Mammary epithelial cell (primary cell): ENCODE measurements at regions of chr17 and their contacts with region 1.

Region 1: DNA sequence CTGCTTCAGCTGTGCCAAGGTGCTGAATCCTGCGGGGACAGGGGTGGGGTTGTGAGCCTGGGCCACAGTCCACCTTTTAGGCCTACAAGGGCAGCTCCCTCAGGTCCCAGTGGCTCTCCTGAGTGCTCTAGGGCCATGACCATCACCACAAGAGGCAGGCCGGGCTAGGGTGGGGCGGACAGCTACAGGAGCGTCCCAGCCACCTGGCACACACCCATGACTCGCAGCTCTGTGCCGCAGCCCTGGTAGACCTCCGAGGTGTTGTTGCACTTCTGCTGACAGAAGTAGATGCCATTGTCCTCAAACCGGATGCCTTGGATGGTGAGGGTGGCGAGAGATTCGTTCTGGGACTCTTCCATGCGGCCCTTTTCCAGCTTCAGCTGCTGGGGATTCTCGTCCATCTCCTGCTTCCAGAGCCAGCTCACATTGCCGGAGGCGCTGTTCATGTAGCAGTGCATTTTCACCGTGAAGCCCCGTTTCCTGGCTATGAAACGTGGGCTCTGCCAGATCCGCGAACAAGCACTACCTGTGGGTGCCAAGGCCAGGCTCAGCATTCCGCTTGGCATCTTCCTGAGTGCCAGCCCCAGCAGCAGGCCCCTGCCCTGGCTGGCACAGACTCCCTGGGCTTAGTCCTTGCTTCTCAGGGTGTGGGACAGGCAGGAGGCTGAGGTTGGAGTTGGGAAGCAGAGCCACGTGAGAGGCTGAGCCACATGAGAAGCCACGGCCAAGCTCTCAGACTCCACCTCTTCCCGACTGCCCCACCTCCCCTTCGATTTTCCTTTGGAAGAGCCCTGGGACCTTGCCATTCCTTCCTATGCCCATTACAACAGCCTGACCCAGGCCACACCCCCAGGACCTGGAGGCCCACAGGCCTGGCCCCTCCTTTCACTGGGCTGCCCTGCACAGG is 2.0 kb downstream of the CD79B start:
- DNase-seq: no peak
- H3K4me3 ChIP-seq: no peak overlapping the region
- H3K27ac ChIP-seq: no peak overlapping the region
- H3K4me1 ChIP-seq: peaks cover 18% of the 10 kb centered on the region
- H3K27me3 ChIP-seq: no peaks in the 10 kb centered on the region
- CTCF ChIP-seq: no peak

Region 2: DNA sequence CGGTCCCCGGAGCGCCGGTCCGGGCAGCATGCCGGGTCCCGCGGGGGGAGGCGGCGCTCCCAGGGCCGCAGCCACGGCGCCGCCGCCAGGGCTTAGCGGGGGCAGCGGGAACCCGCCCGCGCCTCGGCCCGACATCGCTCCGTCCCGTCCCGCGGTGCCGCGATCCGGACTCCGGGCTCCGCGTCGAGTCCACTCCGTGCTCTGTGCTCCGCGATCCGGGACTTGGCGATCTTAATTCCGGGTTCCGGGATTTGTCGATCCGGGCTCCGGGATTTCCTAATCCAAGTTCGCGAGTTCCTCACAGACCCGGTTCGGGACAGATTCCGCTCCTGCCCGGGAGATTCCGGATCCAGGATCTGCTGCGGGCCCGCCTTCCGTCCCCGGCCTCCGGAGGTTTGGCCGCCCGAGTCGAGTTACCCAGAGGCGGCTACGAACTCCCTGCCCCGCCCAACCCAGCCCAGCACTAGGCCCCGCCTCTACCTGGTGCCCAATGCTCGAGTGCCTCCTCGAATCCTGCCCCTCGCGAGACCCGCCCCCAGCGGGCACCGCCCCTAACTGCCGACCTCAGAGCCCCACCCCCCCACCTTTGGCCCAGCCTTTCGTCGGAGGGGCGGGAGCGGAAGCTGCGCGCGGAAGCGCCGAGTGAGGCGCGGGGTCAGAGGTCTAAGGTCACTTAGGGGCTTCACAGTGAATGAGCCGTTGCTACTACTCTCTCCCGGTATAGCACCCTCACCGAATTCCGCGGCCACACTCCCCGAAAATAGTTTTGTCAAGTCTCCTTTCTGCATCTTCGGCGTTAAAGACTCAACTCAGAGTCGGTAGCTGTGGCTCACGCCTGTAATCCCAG is 87.3 kb before region 1 on chr17 and contains the start of gene SMARCD2:
- CTCF ChIA-PET with region 1: no interaction called
- dilution Hi-C with region 1: no loop called
- in situ Hi-C with region 1: no loop called
- intact Hi-C with region 1: no loop called
- DNase-seq: peak; percentile 99
- H3K4me3 ChIP-seq: peak within 1 kb of the TSS; percentile 70 to 98 (median 90)
- H3K27ac ChIP-seq: peak within 1 kb of the TSS; percentile 52
- H3K4me1 ChIP-seq: peaks cover 35% of the 10 kb centered on the region
- H3K27me3 ChIP-seq: no peaks in the 10 kb centered on the region
- CTCF ChIP-seq: no peak
- total RNA-seq, gene SMARCD2: 66.1 to 75.3 TPM

Region 3: GRCh38 chr17:63859257-63859656 is 70.9 kb before region 1 on chr17:
- CTCF ChIA-PET with region 1: no interaction called
- dilution Hi-C with region 1: loop called (anchors 5 kb)
- in situ Hi-C with region 1: no loop called
- intact Hi-C with region 1: no loop called
- DNase-seq: no peak
- H3K4me3 ChIP-seq: no peak overlapping the region
- H3K27ac ChIP-seq: no peak overlapping the region
- H3K4me1 ChIP-seq: no peaks in the 10 kb centered on the region
- H3K27me3 ChIP-seq: no peaks in the 10 kb centered on the region
- CTCF ChIP-seq: no peak

Region 4: GRCh38 chr17:63881876-63882601 is 48.1 kb before region 1 on chr17 and contains the start of gene GH2:
- CTCF ChIA-PET with region 1: no interaction called
- dilution Hi-C with region 1: loop called (anchors 5 kb)
- in situ Hi-C with region 1: no loop called
- intact Hi-C with region 1: no loop called
- DNase-seq: peak; percentile 21
- H3K4me3 ChIP-seq: no peak within 1 kb of the TSS
- H3K27ac ChIP-seq: no peak within 1 kb of the TSS
- H3K4me1 ChIP-seq: no peaks in the 10 kb centered on the region
- H3K27me3 ChIP-seq: no peaks in the 10 kb centered on the region
- CTCF ChIP-seq: peak; percentile 65 to 73
- total RNA-seq, gene GH2: not detected

Region 5: GRCh38 chr17:63984651-63985386 is 54.7 kb after region 1 on chr17:
- CTCF ChIA-PET with region 1: no interaction called
- dilution Hi-C with region 1: loop called (anchors 5 kb)
- in situ Hi-C with region 1: no loop called
- intact Hi-C with region 1: no loop called
- DNase-seq: peak; percentile 84
- H3K4me3 ChIP-seq: no peak overlapping the region
- H3K27ac ChIP-seq: no peak overlapping the region
- H3K4me1 ChIP-seq: peaks cover 20% of the 10 kb centered on the region
- H3K27me3 ChIP-seq: no peaks in the 10 kb centered on the region
- CTCF ChIP-seq: no peak

Region 6: GRCh38 chr17:63998050-63998720 is 68.1 kb after region 1 on chr17 and contains the start of gene PRR29:
- CTCF ChIA-PET with region 1: no interaction called
- dilution Hi-C with region 1: no loop called
- in situ Hi-C with region 1: no loop called
- intact Hi-C with region 1: no loop called
- DNase-seq: peak; percentile 21
- H3K4me3 ChIP-seq: peak within 1 kb of the TSS; percentile 52 to 68 (median 59)
- H3K27ac ChIP-seq: no peak within 1 kb of the TSS
- H3K4me1 ChIP-seq: peaks cover 9% of the 10 kb centered on the region
- H3K27me3 ChIP-seq: no peaks in the 10 kb centered on the region
- CTCF ChIP-seq: no peak
- total RNA-seq, gene PRR29: under 0.01 to 0.09 TPM

Region 7: GRCh38 chr17:64020056-64020766 is 90.1 kb after region 1 on chr17 and contains the start of gene ICAM2:
- CTCF ChIA-PET with region 1: no interaction called
- dilution Hi-C with region 1: loop called (anchors 5 kb)
- in situ Hi-C with region 1: no loop called
- intact Hi-C with region 1: no loop called
- DNase-seq: no peak
- H3K4me3 ChIP-seq: no peak within 1 kb of the TSS
- H3K27ac ChIP-seq: no peak within 1 kb of the TSS
- H3K4me1 ChIP-seq: no peaks in the 10 kb centered on the region
- H3K27me3 ChIP-seq: no peaks in the 10 kb centered on the region
- CTCF ChIP-seq: no peak
- total RNA-seq, gene ICAM2: 0.49 to 2.8 TPM

Region 8: DNA sequence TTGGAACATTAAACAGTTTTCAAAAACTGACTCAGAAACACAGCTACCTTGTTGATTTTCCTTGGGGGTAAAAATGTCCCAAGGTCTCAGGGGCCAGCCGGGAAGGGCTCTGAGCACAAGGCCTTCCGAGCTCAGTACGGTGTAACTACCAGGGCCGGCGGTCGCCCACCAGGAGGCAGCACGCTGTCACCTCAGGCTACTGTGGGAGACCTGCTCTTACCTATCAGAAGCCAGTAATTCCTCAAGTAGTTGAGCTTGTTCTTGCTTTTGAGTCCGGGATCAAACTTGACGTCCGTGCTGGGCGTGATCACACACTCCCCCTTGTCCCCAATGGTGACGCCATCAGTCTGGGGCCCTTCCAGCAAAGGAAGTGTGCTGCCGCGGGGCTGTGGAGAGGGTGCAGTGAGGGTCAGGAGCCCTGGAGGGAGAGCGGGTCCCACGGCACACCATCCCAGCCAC is 133.7 kb after region 1 on chr17:
- CTCF ChIA-PET with region 1: no interaction called
- dilution Hi-C with region 1: no loop called
- in situ Hi-C with region 1: no loop called
- intact Hi-C with region 1: no loop called
- DNase-seq: no peak
- H3K4me3 ChIP-seq: no peak overlapping the region
- H3K27ac ChIP-seq: no peak overlapping the region
- H3K4me1 ChIP-seq: peaks cover 6% of the 10 kb centered on the region
- H3K27me3 ChIP-seq: no peaks in the 10 kb centered on the region
- CTCF ChIP-seq: peak; percentile 20 to 33

Region 9: GRCh38 chr17:64297467-64298098 is 367.5 kb after region 1 on chr17:
- CTCF ChIA-PET with region 1: no interaction called
- dilution Hi-C with region 1: loop called (anchors 5 kb)
- in situ Hi-C with region 1: no loop called
- intact Hi-C with region 1: no loop called
- DNase-seq: no peak
- H3K4me3 ChIP-seq: no peak overlapping the region
- H3K27ac ChIP-seq: no peak overlapping the region
- H3K4me1 ChIP-seq: peaks cover 3% of the 10 kb centered on the region
- H3K27me3 ChIP-seq: no peaks in the 10 kb centered on the region
- CTCF ChIP-seq: no peak